ENCODE measurements at regions of chr1 and their contacts with region 1.

Region 1: GRCh38 chr1:225467193-225468020 is 39.6 kb upstream of the LBR start:
- DNase-seq: peak; percentile 83 to 89 (median 85)
- H3K4me3 ChIP-seq: peak overlapping the region; percentile 74 to 85
- H3K4me3 Mint-ChIP-seq: peak overlapping the region; percentile 90 to 94 (median 92)
- H3K27ac ChIP-seq: peak overlapping the region; percentile 84
- H3K27ac Mint-ChIP-seq: peak overlapping the region; percentile 92 to 98 (median 97)
- H3K4me1 ChIP-seq: peaks cover 48% of the 10 kb centered on the region
- H3K4me1 Mint-ChIP-seq: peaks cover 27 to 63% (median 45%) of the 10 kb centered on the region in 4 donors
- H3K27me3 ChIP-seq: no peaks in the 10 kb centered on the region
- H3K27me3 Mint-ChIP-seq: no peaks in the 10 kb centered on the region

Region 2: GRCh38 chr1:225441314-225442122 is 25.9 kb before region 1 on chr1:
- CTCF ChIA-PET with region 1: interaction called, 43 read pairs
- POLR2A ChIA-PET with region 1: interaction called, 209 read pairs
- intact Hi-C with region 1: loop called (anchors 1 kb)
- DNase-seq: no peak
- H3K4me3 ChIP-seq: no peak overlapping the region
- H3K4me3 Mint-ChIP-seq: peak overlapping the region; percentile 13 to 75 (median 41)
- H3K27ac ChIP-seq: peak overlapping the region; percentile 31
- H3K27ac Mint-ChIP-seq: peak overlapping the region; percentile 25 to 84 (median 49)
- H3K4me1 ChIP-seq: peaks cover 52% of the 10 kb centered on the region
- H3K4me1 Mint-ChIP-seq: peaks cover 40 to 60% (median 53%) of the 10 kb centered on the region in 4 donors
- H3K27me3 ChIP-seq: no peaks in the 10 kb centered on the region
- H3K27me3 Mint-ChIP-seq: no peaks in the 10 kb centered on the region

Region 3: DNA sequence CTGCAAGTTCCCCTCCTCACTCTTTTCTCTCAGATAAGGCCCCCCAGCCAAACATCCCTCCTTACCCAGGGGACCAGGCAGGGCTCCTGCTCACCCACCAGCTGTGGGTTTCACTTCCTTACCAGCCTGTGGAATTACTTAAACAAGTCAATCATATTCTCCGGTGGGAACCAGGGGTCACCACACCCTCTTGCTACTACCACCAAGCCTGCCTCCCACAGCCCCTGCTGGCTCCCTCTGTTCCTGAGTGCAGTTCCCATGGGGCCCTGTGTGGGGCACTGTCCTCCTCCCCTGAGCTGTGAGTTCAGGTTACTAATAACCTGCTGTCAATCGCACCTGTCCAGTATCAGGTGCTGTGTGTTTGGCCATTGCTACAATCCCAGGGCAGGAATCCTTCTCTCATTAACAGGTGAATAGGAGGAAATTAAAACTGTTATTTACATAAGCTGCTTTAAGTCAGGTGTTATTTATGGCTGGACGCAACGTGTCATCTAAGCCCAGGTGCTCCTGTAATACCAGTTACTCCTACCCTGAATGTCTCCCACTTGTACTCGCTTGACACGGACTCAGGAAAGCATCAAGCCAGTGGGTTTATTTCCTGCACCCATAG is 13.5 kb after region 1 on chr1:
- CTCF ChIA-PET with region 1: interaction called, 16 read pairs
- POLR2A ChIA-PET with region 1: interaction called, 19 read pairs
- intact Hi-C with region 1: no loop called
- DNase-seq: peak in 4 of 5 donors; percentile 32 to 41 (median 38)
- H3K4me3 ChIP-seq: no peak overlapping the region
- H3K4me3 Mint-ChIP-seq: no peak overlapping the region
- H3K27ac ChIP-seq: no peak overlapping the region
- H3K27ac Mint-ChIP-seq: peak overlapping the region in 1 of 7 donors; percentile 51
- H3K4me1 ChIP-seq: peaks cover 22% of the 10 kb centered on the region
- H3K4me1 Mint-ChIP-seq: peaks cover 16 to 25% (median 21%) of the 10 kb centered on the region in 4 donors
- H3K27me3 ChIP-seq: no peaks in the 10 kb centered on the region
- H3K27me3 Mint-ChIP-seq: peaks cover 4 to 6% of the 10 kb centered on the region in 2 donors

Region 4: GRCh38 chr1:225923692-225924555 is 456.5 kb after region 1 on chr1 and contains the start of gene PYCR2:
- CTCF ChIA-PET with region 1: no interaction called
- POLR2A ChIA-PET with region 1: interaction called, 23 read pairs
- intact Hi-C with region 1: loop called (anchors 1 kb)
- DNase-seq: peak; percentile 93 to 96 (median 95)
- H3K4me3 ChIP-seq: peak within 1 kb of the TSS; percentile 94 to 96
- H3K4me3 Mint-ChIP-seq: peak within 1 kb of the TSS; percentile 90 to 97 (median 94)
- H3K27ac ChIP-seq: peak within 1 kb of the TSS; percentile 85
- H3K27ac Mint-ChIP-seq: peak within 1 kb of the TSS; percentile 90 to 97 (median 95)
- H3K4me1 ChIP-seq: peaks cover 68% of the 10 kb centered on the region
- H3K4me1 Mint-ChIP-seq: peaks cover 13 to 52% (median 28%) of the 10 kb centered on the region in 4 donors
- H3K27me3 ChIP-seq: no peaks in the 10 kb centered on the region
- H3K27me3 Mint-ChIP-seq: no peaks in the 10 kb centered on the region
- total RNA-seq, gene PYCR2: 102 to 116 TPM

Region 5: GRCh38 chr1:225999227-225999911 is 532.0 kb after region 1 on chr1 and contains the start of gene SDE2:
- CTCF ChIA-PET with region 1: interaction called, 5 read pairs
- POLR2A ChIA-PET with region 1: interaction called, 53 read pairs
- intact Hi-C with region 1: loop called (anchors 1 kb)
- DNase-seq: peak; percentile 99 to 100 (median 100)
- H3K4me3 ChIP-seq: peak within 1 kb of the TSS; percentile 78 to 99
- H3K4me3 Mint-ChIP-seq: peak within 1 kb of the TSS; percentile 99 to 100 (median 100)
- H3K27ac ChIP-seq: peak within 1 kb of the TSS; percentile 98
- H3K27ac Mint-ChIP-seq: peak within 1 kb of the TSS; percentile 100
- H3K4me1 ChIP-seq: peaks cover 81% of the 10 kb centered on the region
- H3K4me1 Mint-ChIP-seq: peaks cover 44 to 78% (median 61%) of the 10 kb centered on the region in 4 donors
- H3K27me3 ChIP-seq: no peaks in the 10 kb centered on the region
- H3K27me3 Mint-ChIP-seq: no peaks in the 10 kb centered on the region
- total RNA-seq, gene SDE2: 21.1 to 21.2 TPM